ENCODE measurements at regions of chr4 and their contacts with region 1.

Region 1: DNA sequence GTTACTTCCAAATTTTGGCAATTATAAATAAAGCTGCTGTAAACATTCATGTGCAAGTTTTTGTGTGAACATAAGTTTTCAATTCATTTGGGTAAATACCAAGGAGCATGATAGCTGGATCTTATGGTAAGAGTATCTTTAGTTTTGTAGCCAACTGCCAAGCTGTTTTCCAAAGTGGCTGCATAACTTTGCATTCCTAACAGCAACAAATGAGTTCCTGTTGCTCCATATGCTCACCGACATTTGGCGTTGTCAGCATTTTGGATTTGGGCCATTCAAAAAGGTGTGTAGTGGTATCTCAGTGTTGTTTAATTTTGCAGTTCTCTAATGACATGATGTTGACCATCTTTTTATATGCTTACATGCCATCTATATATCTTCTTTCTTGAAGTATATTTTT is 208.5 kb downstream of the INPP4B start:
- DNase-seq: no peak
- H3K4me3 ChIP-seq: no peak overlapping the region
- H3K4me3 Mint-ChIP-seq: no peak overlapping the region
- H3K27ac ChIP-seq: no peak overlapping the region
- H3K27ac Mint-ChIP-seq: no peak overlapping the region
- H3K4me1 ChIP-seq: no peaks in the 10 kb centered on the region
- H3K4me1 Mint-ChIP-seq: peaks cover 0 to 2% (median 0%) of the 10 kb centered on the region in 4 donors
- H3K27me3 ChIP-seq: no peaks in the 10 kb centered on the region
- H3K27me3 Mint-ChIP-seq: no peaks in the 10 kb centered on the region

Region 2: GRCh38 chr4:142585411-142585810 is 52.2 kb before region 1 on chr4:
- CTCF ChIA-PET with region 1: no interaction called
- POLR2A ChIA-PET with region 1: no interaction called
- intact Hi-C with region 1: loop called (anchors 10 kb)
- DNase-seq: no peak
- H3K4me3 ChIP-seq: no peak overlapping the region
- H3K4me3 Mint-ChIP-seq: no peak overlapping the region
- H3K27ac ChIP-seq: no peak overlapping the region
- H3K27ac Mint-ChIP-seq: no peak overlapping the region
- H3K4me1 ChIP-seq: peaks cover 4% of the 10 kb centered on the region
- H3K4me1 Mint-ChIP-seq: peaks cover 17 to 40% (median 30%) of the 10 kb centered on the region in 4 donors
- H3K27me3 ChIP-seq: no peaks in the 10 kb centered on the region
- H3K27me3 Mint-ChIP-seq: no peaks in the 10 kb centered on the region